A673 (cell line): ENCODE measurements at regions of chr2 and their contacts with region 1.

Region 1: GRCh38 chr2:62415019-62415431 is 91.0 kb downstream of the TMEM17 start:
- DNase-seq: no peak
- H3K4me3 ChIP-seq: no peak overlapping the region
- H3K27ac ChIP-seq: no peak overlapping the region
- H3K4me1 ChIP-seq: no peaks in the 10 kb centered on the region
- H3K27me3 ChIP-seq: no peaks in the 10 kb centered on the region
- CTCF ChIP-seq: no peak

Region 2: DNA sequence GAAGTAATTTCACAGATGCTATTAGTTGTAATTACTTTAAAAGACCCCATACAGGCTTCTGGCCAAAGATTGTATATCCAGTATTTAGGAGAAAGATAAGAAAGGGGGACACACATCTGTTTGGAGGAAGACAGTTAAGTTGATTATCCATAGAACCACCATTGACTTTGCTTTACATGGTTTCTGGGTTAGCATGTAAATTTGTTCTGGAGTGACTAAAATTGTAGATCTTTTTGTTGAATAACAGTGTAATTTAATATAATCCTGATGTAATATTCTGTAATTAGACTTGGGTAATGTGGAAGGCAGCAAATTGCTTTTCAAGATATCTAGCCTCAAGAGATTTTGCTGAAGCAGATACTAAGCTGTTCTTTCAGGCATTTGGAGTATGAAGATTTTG is 492.3 kb before region 1 on chr2:
- CTCF ChIA-PET with region 1: no interaction called
- POLR2A ChIA-PET with region 1: no interaction called
- intact Hi-C with region 1: loop called (anchors 2 kb)
- DNase-seq: no peak
- H3K4me3 ChIP-seq: no peak overlapping the region
- H3K27ac ChIP-seq: no peak overlapping the region
- H3K4me1 ChIP-seq: no peaks in the 10 kb centered on the region
- H3K27me3 ChIP-seq: no peaks in the 10 kb centered on the region
- CTCF ChIP-seq: no peak

Region 3: GRCh38 chr2:62195421-62196277 is 219.4 kb before region 1 on chr2 and contains the start of gene B3GNT2:
- CTCF ChIA-PET with region 1: no interaction called
- POLR2A ChIA-PET with region 1: no interaction called
- intact Hi-C with region 1: loop called (anchors 10 kb)
- DNase-seq: peak; percentile 83
- H3K4me3 ChIP-seq: peak within 1 kb of the TSS; percentile 98
- H3K27ac ChIP-seq: peak within 1 kb of the TSS; percentile 74
- H3K4me1 ChIP-seq: peaks cover 9% of the 10 kb centered on the region
- H3K27me3 ChIP-seq: no peaks in the 10 kb centered on the region
- CTCF ChIP-seq: no peak
- total RNA-seq, gene B3GNT2: 6.2 and 6.5 TPM in 2 replicates